ENCODE measurements at regions of chr2 and their contacts with region 1.

Region 1: GRCh38 chr2:128513961-128514283 is 195.3 kb upstream of the HS6ST1 start:
- H3K4me3 Mint-ChIP-seq: peak overlapping the region; percentile 53
- H3K27ac Mint-ChIP-seq: peak overlapping the region; percentile 82
- H3K4me1 Mint-ChIP-seq: peaks cover 58% of the 10 kb centered on the region
- H3K27me3 Mint-ChIP-seq: no peaks in the 10 kb centered on the region

Region 2: DNA sequence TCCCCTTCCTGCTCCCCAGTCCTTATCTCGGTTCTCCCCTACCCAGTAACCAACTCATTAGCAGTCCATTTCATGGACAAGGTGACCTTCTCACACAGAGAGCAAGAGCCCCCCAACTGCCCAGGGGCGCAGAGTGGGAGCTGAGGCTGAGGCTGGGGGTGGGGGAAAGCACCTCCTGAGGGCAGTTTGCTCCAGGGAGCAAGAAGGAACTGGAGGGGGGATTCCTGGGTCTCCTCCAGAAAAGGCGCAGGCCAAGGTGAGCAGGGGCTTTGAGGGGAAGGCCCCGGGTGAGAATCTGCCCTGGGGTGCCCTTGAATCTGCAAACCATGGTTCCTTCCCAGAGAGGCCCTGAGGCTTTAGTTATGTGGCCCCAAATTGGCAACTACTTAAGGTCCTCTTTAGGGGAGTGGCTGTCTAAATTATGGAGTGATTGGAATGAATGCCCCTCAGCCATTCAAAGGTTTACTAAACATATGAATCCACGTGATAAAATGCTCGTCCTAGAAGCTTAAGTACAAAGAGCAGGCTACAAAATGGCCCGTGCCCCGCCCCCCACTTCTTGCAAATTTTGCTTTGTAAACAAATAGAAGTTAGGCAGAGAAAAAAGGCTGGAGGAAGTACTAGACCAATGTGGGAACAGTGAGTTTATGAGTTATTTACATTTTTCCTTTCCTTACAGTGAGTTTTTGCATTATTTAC is 71.7 kb before region 1 on chr2:
- intact Hi-C with region 1: loop called (anchors 5 kb)
- H3K4me3 Mint-ChIP-seq: peak overlapping the region; percentile 51
- H3K27ac Mint-ChIP-seq: peak overlapping the region; percentile 87
- H3K4me1 Mint-ChIP-seq: peaks cover 71% of the 10 kb centered on the region
- H3K27me3 Mint-ChIP-seq: peaks cover 17% of the 10 kb centered on the region

Measured in dendritic cell treated with granulocyte-macrophage colony-stimulating factor and Interleukin-4, amounts not matched to agents 40 ng/mL and 50 ng/mL, for 4 days (primary cell).